ENCODE measurements at regions of chr3 and their contacts with region 1.

Region 1: GRCh38 chr3:32018757-32019564 is 37.4 kb downstream of the ZNF860 start:
- DNase-seq: no peak
- ATAC-seq: no peak
- H3K4me3 Mint-ChIP-seq: no peak overlapping the region
- H3K27ac Mint-ChIP-seq: no peak overlapping the region
- H3K4me1 Mint-ChIP-seq: no peaks in the 10 kb centered on the region
- H3K27me3 Mint-ChIP-seq: peaks cover 12% of the 10 kb centered on the region

Region 2: DNA sequence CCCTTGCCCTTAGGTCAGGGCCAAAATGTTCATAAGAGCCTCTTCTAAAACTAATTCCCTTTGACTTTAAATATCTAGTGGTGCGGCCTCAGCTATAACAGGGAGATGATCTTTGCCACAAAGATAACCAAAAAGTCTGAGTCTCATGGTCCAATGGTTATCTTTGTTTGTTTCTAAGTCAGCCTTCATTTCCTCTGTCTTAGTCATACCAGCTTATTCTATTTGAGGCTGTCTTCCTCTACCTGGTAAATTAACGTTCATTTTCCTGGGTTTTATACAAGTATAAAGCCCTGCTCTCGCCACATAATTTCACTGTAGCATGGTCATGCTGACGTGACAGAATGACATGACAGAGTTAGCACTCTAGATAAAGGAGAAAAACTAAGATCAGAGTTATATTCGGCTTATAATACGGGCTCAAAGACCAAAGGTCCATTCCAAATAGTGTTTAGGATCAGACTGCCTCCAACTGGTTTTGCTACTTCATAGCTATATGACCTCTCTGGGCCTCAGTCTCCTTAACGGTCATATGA is 19.0 kb before region 1 on chr3:
- CTCF ChIA-PET with region 1: no interaction called
- POLR2A ChIA-PET with region 1: no interaction called
- DNase-seq: no peak
- ATAC-seq: no peak
- H3K4me3 Mint-ChIP-seq: no peak overlapping the region
- H3K27ac Mint-ChIP-seq: no peak overlapping the region
- H3K4me1 Mint-ChIP-seq: no peaks in the 10 kb centered on the region
- H3K27me3 Mint-ChIP-seq: peaks cover 22% of the 10 kb centered on the region

Region 3: DNA sequence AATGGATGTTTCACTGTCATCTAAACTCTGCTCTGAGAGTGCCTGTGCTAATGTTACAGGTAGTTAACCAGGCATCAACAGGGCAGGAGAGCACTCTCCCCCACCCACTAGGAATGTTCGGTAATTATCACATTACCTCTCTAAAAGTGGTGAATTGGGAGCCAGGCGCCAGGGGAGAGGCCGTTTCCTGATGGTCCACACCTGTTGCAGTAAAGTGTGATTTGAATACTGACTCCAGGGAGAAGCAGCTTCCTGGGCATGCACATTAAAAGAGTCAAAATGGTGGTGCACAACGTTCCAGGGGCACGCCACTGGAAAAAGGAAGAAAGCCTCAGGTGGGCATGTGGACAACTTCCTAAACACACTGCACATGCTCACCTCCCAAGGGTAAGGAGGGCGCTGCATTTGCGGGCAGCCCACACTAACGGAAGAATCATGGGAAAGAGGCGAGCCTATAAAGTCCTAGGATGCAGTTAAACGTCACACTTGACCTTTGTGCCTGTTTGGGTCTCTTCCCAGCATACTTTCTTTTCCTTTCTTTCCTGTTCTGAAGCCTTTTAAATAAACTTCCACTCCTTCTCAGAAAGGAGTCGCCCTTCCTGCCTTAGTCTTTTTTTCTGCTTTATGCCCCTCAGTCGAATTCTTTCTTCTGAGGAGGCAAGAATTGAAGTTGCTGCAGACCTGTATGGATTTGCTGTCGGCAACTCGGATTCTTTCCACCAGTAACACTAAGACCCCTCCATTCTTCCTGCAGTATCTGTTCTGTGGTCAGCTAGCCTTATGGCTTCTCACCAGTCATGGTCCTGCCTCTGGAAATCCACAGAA is 58.5 kb after region 1 on chr3:
- CTCF ChIA-PET with region 1: no interaction called
- POLR2A ChIA-PET with region 1: no interaction called
- DNase-seq: no peak
- ATAC-seq: no peak
- H3K4me3 Mint-ChIP-seq: no peak overlapping the region
- H3K27ac Mint-ChIP-seq: no peak overlapping the region
- H3K4me1 Mint-ChIP-seq: no peaks in the 10 kb centered on the region
- H3K27me3 Mint-ChIP-seq: peaks cover 12% of the 10 kb centered on the region

Region 4: GRCh38 chr3:32113566-32113965 is 94.6 kb after region 1 on chr3:
- CTCF ChIA-PET with region 1: interaction called, 10 read pairs
- POLR2A ChIA-PET with region 1: no interaction called
- DNase-seq: no peak
- ATAC-seq: peak; percentile 2
- H3K4me3 Mint-ChIP-seq: peak overlapping the region; percentile 65
- H3K27ac Mint-ChIP-seq: peak overlapping the region; percentile 91
- H3K4me1 Mint-ChIP-seq: peaks cover 68% of the 10 kb centered on the region
- H3K27me3 Mint-ChIP-seq: no peaks in the 10 kb centered on the region

Region 5: DNA sequence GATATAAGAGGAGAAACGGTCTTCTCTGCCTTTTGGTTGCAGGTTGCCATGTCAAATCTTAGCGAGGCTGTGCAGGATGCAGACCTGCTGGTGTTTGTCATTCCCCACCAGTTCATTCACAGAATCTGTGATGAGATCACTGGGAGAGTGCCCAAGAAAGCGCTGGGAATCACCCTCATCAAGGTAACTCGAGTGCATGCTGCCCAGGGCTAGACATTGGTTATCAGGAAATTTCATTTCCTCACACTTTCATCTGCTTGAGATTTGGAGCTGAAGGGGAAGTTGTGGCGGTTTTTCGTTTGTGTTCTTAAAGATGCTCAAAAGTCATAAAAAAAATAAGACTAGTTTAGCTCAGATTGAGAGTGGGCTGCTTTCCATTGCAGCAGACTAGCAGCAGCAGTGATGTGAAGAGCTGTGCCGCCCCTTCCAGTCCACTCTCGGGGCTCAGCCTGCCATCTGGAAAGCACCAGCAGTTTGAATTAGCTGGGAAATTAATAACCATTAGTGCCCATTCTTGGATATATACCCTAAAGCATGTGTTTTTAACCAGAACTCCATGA is 119.7 kb after region 1 on chr3:
- CTCF ChIA-PET with region 1: interaction called, 69 read pairs
- POLR2A ChIA-PET with region 1: no interaction called
- DNase-seq: no peak
- ATAC-seq: peak; percentile 30
- H3K4me3 Mint-ChIP-seq: no peak overlapping the region
- H3K27ac Mint-ChIP-seq: peak overlapping the region; percentile 62
- H3K4me1 Mint-ChIP-seq: peaks cover 22% of the 10 kb centered on the region
- H3K27me3 Mint-ChIP-seq: no peaks in the 10 kb centered on the region

Region 6: GRCh38 chr3:32143849-32144757 is 125.1 kb after region 1 on chr3:
- CTCF ChIA-PET with region 1: interaction called, 69 read pairs
- POLR2A ChIA-PET with region 1: no interaction called
- DNase-seq: peak; percentile 67
- ATAC-seq: peak; percentile 72
- H3K4me3 Mint-ChIP-seq: no peak overlapping the region
- H3K27ac Mint-ChIP-seq: no peak overlapping the region
- H3K4me1 Mint-ChIP-seq: peaks cover 20% of the 10 kb centered on the region
- H3K27me3 Mint-ChIP-seq: no peaks in the 10 kb centered on the region

Region 7: GRCh38 chr3:32154205-32154579 is 135.2 kb after region 1 on chr3:
- CTCF ChIA-PET with region 1: interaction called, 18 read pairs
- POLR2A ChIA-PET with region 1: no interaction called
- DNase-seq: no peak
- ATAC-seq: peak; percentile 33
- H3K4me3 Mint-ChIP-seq: no peak overlapping the region
- H3K27ac Mint-ChIP-seq: no peak overlapping the region
- H3K4me1 Mint-ChIP-seq: no peaks in the 10 kb centered on the region
- H3K27me3 Mint-ChIP-seq: no peaks in the 10 kb centered on the region

Region 8: DNA sequence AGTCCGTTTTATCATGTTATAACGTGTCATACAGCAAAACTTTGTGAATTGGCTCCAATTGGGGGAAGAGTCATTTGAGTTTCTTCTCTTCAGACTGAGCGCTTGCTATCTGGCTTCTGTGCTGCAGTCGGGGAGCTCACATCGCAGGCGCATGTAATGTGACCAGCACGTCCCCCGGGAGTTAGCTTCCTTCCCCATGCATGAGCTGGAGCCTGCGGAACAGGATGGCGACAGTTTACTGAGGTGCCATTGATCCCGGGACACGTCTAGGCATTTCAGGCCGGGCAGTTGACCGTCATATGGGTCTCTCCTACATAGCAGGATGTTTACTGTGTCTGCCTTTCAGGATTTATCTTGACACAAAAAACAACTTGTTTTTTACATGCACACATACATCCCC is 264.3 kb after region 1 on chr3:
- CTCF ChIA-PET with region 1: no interaction called
- POLR2A ChIA-PET with region 1: no interaction called
- DNase-seq: no peak
- ATAC-seq: no peak
- H3K4me3 Mint-ChIP-seq: no peak overlapping the region
- H3K27ac Mint-ChIP-seq: no peak overlapping the region
- H3K4me1 Mint-ChIP-seq: no peaks in the 10 kb centered on the region
- H3K27me3 Mint-ChIP-seq: no peaks in the 10 kb centered on the region

Measured in activated CD8-positive, alpha-beta T cell treated with anti-CD3 and anti-CD28 coated beads, Interleukin-2, amount 10 ng/mL, durations not matched to agents 7 days and 5 days (primary cell).